GM10248 (cell line): ENCODE measurements at regions of chr21 and their contacts with region 1.

Region 1: DNA sequence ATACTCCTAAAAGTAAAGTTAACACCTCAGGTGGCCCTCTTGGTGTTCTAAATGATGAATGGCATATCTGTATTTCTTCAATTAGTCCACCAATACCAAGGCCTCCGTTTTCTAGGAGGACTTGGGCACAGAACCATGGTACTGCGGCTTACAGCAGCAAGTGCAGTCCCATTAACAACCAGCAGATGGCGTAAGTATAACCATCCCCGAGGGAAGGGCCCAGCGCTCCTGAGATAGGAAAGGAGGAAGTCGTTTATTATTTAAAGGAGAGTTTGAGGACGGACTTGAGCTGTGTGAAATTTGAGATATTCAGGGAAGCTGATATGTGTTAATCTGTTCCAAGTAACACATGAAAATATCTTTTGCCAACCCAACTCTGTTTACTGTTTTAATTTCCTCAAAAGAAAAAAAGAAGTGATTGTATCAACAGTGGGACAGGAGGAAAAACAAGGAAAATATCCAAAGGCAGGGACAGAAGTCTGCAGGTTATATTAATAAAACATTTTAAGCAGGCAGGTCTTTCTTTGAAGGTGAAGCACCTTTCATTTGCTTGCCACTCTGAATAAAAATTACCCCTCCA is 37.7 kb upstream of the KCNJ15 start:
- DNase-seq: peak; percentile 58
- CTCF ChIP-seq: peak; percentile 87

Region 2: GRCh38 chr21:37927711-37928110 is 291.4 kb before region 1 on chr21:
- CTCF ChIA-PET with region 1: no interaction called
- POLR2A ChIA-PET with region 1: no interaction called
- DNase-seq: no peak
- CTCF ChIP-seq: no peak

Region 3: DNA sequence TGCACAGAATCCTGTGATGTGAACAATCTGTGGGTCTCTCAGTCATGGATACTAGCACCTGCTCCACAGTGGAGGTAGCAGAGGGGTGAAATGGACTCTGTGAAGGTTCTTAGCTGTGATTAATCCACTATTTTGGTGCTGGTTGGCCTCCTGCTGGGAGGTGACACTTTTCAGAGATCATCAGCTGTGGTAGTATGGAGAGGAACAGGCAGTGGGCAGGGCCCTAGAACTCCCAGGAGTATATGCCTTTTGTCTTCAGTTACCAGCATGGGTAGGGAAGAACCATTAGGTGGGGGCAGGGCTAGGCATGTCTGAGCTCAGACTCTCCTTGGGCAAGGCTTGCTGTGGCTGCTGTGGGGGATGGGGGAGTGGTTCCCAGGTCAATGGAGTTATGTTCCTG is 16.3 kb before region 1 on chr21:
- CTCF ChIA-PET with region 1: interaction called, 16 read pairs
- POLR2A ChIA-PET with region 1: no interaction called
- DNase-seq: no peak
- CTCF ChIP-seq: no peak

Region 4: DNA sequence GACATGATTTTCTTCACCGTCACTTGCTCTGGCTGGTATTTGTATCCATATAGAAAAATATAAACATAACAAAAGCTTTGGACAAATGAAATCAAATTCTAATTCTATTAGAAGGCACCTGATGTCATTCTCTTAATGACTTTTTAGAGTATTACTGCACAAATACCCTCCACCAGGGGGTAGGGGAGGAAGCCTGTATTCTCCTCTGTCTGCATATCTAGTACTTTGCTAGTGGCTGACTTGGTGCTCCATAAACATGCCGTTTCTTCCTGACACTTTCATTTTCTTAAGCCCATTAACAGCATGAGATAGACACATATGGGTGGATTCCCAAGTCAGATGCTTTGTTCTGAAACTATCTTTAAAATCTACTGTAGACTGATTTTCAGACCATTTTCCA is 17.1 kb after region 1 on chr21:
- CTCF ChIA-PET with region 1: interaction called, 22 read pairs
- POLR2A ChIA-PET with region 1: no interaction called
- DNase-seq: no peak
- CTCF ChIP-seq: no peak

Region 5: GRCh38 chr21:38333301-38334272 is 114.4 kb after region 1 on chr21:
- CTCF ChIA-PET with region 1: interaction called, 11 read pairs
- POLR2A ChIA-PET with region 1: no interaction called
- DNase-seq: no peak
- CTCF ChIP-seq: no peak